Ascending aorta (tissue), 2 donors: ENCODE measurements at regions of chr20 and their contacts with region 1.

Region 1: DNA sequence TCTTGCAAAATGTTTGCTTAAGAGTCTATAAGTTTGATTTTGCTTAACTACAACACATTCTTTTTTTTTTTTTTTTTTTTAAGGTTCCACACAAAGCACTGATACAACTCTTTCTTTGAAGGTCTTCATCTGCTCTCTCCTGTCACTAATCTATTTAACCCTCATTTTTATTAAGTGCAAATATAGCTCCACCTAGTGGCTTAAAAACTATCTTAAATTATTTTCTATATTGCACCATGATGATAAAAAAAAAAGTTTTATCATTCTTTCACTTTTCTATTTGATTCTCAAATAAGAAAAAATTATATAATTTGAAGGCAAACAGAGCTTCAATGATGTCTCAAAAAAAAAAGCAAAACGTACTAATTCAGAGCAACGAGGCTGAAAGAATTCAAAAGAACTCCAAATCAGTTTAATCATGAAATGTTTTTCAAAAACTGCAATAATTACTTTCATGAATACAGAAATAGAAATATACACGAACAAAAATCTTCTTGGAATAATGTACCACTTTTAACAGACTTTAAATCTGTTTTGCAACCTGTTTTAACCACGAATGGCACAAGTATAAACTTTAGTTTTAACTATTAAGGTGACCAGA is 12.8 kb downstream of the ESF1 start:
- DNase-seq: no peak
- H3K4me3 ChIP-seq: no peak overlapping the region
- H3K27ac ChIP-seq: no peak overlapping the region
- H3K4me1 ChIP-seq: no peaks in the 10 kb centered on the region
- H3K27me3 ChIP-seq: no peaks in the 10 kb centered on the region
- CTCF ChIP-seq: peak; percentile 26 to 52 (median 37)

Region 2: GRCh38 chr20:12925214-12925755 is 846.7 kb before region 1 on chr20:
- intact Hi-C with region 1: loop called (anchors 10 kb)
- DNase-seq: no peak
- H3K4me3 ChIP-seq: peak overlapping the region in 1 of 2 donors; percentile 11
- H3K27ac ChIP-seq: no peak overlapping the region
- H3K4me1 ChIP-seq: peaks cover 3 to 5% of the 10 kb centered on the region in 2 donors
- H3K27me3 ChIP-seq: no peaks in the 10 kb centered on the region
- CTCF ChIP-seq: peak; percentile 72 to 84 (median 81)

Region 3: DNA sequence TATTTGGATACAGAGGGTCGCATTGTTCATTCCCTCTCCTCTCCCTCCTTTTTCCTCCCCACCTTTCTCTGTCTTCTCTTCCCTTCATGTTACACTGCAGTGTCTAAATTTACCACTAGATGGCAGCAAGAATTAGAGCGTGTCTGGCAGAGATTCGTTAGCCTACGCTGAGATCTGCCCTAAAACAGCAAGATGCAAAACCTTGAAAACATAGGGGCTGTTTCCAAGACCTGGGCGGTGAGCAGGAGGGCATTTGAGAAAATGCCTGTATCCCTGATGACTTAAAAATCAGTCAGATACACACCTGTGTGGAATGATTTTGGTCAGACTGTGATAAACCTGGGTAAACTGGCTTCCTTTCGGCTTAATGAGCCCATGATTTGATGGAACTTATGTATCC is 652.4 kb before region 1 on chr20:
- intact Hi-C with region 1: loop called (anchors 5 kb)
- DNase-seq: no peak
- H3K4me3 ChIP-seq: no peak overlapping the region
- H3K27ac ChIP-seq: no peak overlapping the region
- H3K4me1 ChIP-seq: no peaks in the 10 kb centered on the region
- H3K27me3 ChIP-seq: no peaks in the 10 kb centered on the region
- CTCF ChIP-seq: peak; percentile 71 to 88 (median 79)

Region 4: GRCh38 chr20:13458860-13459451 is 313.0 kb before region 1 on chr20:
- intact Hi-C with region 1: loop called (anchors 5 kb)
- DNase-seq: no peak
- H3K4me3 ChIP-seq: no peak overlapping the region
- H3K27ac ChIP-seq: no peak overlapping the region
- H3K4me1 ChIP-seq: no peaks in the 10 kb centered on the region
- H3K27me3 ChIP-seq: no peaks in the 10 kb centered on the region
- CTCF ChIP-seq: peak; percentile 37 to 52 (median 45)

Region 5: DNA sequence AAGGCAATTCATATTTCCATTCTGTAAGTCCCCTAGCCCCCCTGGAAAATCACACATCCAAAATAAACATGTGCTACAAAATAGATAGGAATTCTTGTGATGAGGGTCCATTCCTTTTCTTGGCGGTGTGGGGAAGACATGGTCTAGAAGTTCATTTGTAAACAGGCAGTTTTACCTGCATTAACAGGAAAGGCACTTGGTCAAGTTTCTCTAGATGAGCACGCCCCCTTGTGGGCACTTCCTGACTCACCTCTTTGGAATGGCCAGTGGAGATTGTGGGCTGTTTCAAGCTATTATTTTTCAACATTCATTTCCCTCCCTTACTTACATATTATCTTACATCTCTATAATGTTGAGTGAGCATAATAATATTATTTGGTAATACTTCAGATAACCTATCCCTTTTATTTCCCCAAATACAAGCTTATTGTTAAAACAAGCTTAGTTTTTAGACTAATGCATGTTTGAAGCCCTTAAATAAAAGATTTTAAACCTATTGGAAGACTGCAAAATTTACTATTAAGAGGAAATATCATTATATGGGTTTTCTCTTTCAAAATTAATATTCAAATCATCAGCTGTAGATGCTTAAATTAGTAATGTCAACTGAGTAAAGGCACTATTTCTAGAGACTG is 225.3 kb before region 1 on chr20:
- intact Hi-C with region 1: loop called (anchors 5 kb)
- DNase-seq: peak in 1 of 2 donors; percentile 86
- H3K4me3 ChIP-seq: no peak overlapping the region
- H3K27ac ChIP-seq: no peak overlapping the region
- H3K4me1 ChIP-seq: peaks cover 0 to 7% of the 10 kb centered on the region in 2 donors
- H3K27me3 ChIP-seq: no peaks in the 10 kb centered on the region
- CTCF ChIP-seq: peak; percentile 47 to 67 (median 64)

Region 6: GRCh38 chr20:13839421-13840092 is 67.6 kb after region 1 on chr20:
- intact Hi-C with region 1: no loop called
- DNase-seq: no peak
- H3K4me3 ChIP-seq: no peak overlapping the region
- H3K27ac ChIP-seq: no peak overlapping the region
- H3K4me1 ChIP-seq: no peaks in the 10 kb centered on the region
- H3K27me3 ChIP-seq: no peaks in the 10 kb centered on the region
- CTCF ChIP-seq: no peak

Region 7: DNA sequence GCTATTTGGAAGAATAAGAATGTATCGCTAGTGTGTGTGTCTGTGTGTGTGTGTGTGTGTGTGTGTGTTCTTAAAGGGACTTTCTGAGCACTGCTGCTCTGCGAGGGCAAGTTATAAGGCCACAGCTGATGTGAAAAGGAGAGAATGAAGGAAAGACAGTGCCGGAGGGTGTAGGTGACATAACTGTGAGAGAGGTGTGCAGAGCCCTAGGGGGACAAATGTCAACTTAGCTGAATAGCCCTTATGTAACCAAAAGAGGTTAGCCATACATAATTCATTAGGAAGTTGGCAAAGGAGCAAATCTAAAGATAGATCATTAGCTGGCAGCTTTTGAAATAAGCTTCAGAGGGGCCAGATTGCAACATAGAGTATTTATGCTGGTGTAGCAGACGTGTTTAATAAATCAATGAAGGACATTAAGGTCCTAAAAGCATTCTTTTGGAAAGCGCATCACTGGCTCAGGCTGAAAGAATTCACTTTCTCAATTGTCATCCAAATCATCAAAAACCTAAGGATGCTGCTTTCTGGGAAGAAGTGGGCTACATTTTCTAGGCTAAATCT is 93.9 kb after region 1 on chr20:
- intact Hi-C with region 1: no loop called
- DNase-seq: no peak
- H3K4me3 ChIP-seq: no peak overlapping the region
- H3K27ac ChIP-seq: peak overlapping the region; percentile 45 to 79
- H3K4me1 ChIP-seq: peaks cover 9 to 16% of the 10 kb centered on the region in 2 donors
- H3K27me3 ChIP-seq: no peaks in the 10 kb centered on the region
- CTCF ChIP-seq: no peak